Prostate gland (tissue), 2 donors: ENCODE measurements at regions of chr20 and their contacts with region 1.

Region 1: DNA sequence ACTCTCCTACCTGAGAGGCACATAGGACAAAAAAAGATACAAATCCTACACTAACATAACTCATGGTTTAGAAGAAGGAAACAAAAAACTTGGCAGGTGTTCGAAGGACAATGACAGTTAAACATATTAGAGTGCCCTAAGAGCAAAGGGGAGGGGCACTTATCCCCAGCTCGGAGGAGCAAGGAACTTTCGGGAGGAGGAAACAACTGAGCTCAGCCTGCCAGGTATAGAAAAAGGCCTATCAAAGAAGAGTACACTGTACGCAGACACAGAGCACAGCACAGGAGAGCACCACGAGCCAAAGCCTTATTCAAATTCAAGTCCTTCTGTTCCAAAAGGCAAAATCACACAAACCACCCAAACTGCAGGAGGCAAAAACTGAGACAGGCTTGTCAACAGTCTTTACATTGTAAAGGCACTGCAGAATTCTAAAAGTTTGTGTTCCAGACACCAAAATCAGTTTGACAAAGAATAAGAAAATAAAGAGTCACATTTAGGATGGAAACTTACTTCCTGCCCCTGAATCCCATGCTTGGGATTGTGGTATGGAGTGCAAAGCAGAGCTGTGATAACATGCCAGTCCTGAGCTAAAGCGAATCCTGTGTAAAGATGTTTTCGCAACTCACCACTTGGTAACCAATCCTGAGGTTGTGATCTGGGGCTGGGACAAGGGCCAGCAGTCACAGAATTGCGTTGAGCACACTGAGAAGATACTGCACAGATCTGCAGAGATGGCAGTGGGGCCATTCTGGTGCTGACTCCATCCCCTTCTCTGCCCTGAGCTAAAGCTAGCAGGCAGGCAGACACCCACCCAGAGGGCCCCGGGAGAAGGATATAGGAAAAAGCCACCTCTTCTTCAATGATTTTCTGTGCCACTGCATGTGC is 108.6 kb downstream of the CHD6 start:
- DNase-seq: peak; percentile 48
- H3K4me3 ChIP-seq: no peak overlapping the region
- H3K27ac ChIP-seq: peak overlapping the region in 1 of 2 donors; percentile 34
- H3K4me1 ChIP-seq: peaks cover 8% of the 10 kb centered on the region
- H3K27me3 ChIP-seq: no peaks in the 10 kb centered on the region
- CTCF ChIP-seq: no peak
- POLR2A ChIP-seq: no peak

Region 2: DNA sequence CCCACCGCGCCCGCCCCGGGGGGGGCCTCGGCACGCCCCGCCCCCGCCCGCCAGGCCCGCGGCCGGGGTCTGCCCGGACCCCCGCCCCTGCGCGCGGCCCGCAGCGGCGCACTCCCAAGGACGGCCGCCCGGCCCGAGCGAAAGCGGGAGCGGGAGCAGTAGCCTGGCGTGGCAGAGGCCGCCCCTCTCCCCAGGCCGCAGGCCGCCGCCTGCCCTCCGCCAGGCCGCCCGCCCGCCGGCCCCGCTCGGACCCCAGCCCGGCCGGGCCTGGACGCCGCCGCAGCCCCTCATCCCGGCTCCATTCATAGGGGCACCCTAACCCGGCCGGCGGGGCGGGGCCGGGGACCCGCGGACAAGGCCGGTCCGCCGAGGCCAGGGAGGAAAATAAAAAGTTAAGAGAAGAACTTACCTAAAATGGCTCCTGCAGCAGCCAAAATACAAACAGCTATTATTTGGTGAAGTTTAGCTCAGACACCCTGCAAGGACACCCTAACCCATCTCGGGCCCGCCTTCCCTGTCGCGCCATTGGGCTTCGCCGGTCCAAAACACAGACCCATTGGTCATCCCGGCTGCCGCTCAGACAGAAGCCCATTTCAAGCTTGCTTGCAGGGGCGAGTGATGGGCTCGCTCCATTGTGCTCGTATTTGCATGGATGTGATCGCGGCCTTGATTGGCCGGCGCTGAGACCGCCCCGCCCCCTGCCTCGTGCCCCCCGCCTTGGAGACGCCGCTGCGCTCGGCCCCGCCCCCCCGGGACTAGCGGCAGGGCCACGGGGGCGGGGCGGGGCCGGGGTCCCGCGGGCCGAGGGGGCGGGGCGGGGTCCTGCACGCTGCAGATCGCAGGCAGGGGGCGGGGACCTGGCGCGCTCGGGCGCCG is 108.6 kb after region 1 on chr20 and contains the start of gene CHD6:
- intact Hi-C with region 1: loop called (anchors 10 kb)
- DNase-seq: peak; percentile 99
- H3K4me3 ChIP-seq: peak within 1 kb of the TSS; percentile 78 to 81
- H3K27ac ChIP-seq: peak within 1 kb of the TSS; percentile 82 to 88
- H3K4me1 ChIP-seq: peaks cover 9% of the 10 kb centered on the region
- H3K27me3 ChIP-seq: no peaks in the 10 kb centered on the region
- CTCF ChIP-seq: no peak
- POLR2A ChIP-seq: peak; percentile 64
- total RNA-seq, gene CHD6: 40.9 to 72.0 TPM